Activated T-helper 2 cell treated with anti-CD3 and anti-CD28 coated beads, Interferon-gamma antibody, Interleukin-2, Interleukin-4, amounts not matched to agents 10 μg/mL and 5 μg/mL and 100 μg/mL, durations not matched to agents 14 hours and 24 hours and 36 hours (primary cell): ENCODE measurements at regions of chr12 and their contacts with region 1.

Region 1: GRCh38 chr12:27396216-27396815 is 50.2 kb upstream of the SMCO2 start:
- DNase-seq: no peak
- H3K4me3 Mint-ChIP-seq: no peak overlapping the region
- H3K27ac Mint-ChIP-seq: no peak overlapping the region
- H3K4me1 Mint-ChIP-seq: no peaks in the 10 kb centered on the region
- H3K27me3 Mint-ChIP-seq: no peaks in the 10 kb centered on the region

Region 2: DNA sequence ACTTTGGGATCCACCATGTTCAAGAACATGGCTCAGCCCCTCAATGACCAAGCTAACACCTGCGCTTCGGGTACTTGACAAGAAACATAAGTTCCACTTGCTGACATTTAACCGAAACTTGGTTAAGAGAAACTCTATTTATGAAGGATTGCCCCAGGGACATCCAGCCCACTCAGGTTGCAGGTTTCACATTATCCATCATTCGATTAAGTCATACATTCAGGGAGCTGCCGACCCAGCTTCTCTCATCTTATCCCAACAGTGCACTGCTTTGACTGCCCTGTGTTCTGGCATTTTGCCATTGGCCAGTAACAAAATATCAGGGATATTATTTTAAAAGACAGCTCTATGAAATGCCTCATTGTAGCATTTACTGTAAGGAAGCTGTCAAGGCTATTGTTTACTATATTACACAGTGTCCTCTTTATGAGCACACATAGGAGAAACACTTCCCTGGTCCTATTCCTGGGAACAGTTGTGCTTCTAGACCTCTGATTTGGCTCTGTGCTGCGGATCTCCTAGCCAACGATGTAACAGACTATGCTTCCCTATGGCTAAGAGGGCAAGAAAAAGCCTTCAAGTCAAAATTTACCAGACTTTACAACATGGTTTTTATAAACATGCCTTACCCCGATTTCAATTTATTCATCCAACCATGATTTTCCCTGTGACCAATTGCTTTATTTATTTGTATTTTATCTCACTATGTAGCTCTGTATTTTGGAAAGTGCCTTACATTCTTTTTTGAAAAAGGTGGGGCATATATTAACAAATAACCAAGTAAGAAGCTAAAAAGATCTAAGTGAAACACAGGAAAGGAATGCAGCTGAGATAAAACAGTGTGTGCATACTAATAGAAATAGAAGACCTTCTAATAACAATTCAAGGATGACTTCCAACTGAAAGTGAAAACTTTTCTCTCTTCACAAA is 672.7 kb before region 1 on chr12:
- intact Hi-C with region 1: loop called (anchors 10 kb)
- DNase-seq: no peak
- H3K4me3 Mint-ChIP-seq: no peak overlapping the region
- H3K27ac Mint-ChIP-seq: no peak overlapping the region
- H3K4me1 Mint-ChIP-seq: peaks cover 26% of the 10 kb centered on the region
- H3K27me3 Mint-ChIP-seq: no peaks in the 10 kb centered on the region